ENCODE measurements at regions of chr3 and their contacts with region 1.

Region 1: GRCh38 chr3:125110016-125110875 is 54.4 kb upstream of the HEG1 start:
- DNase-seq: no peak
- H3K4me3 Mint-ChIP-seq: no peak overlapping the region
- H3K27ac Mint-ChIP-seq: peak overlapping the region; percentile 78
- H3K4me1 Mint-ChIP-seq: peaks cover 52% of the 10 kb centered on the region
- H3K27me3 Mint-ChIP-seq: peaks cover 36% of the 10 kb centered on the region

Region 2: DNA sequence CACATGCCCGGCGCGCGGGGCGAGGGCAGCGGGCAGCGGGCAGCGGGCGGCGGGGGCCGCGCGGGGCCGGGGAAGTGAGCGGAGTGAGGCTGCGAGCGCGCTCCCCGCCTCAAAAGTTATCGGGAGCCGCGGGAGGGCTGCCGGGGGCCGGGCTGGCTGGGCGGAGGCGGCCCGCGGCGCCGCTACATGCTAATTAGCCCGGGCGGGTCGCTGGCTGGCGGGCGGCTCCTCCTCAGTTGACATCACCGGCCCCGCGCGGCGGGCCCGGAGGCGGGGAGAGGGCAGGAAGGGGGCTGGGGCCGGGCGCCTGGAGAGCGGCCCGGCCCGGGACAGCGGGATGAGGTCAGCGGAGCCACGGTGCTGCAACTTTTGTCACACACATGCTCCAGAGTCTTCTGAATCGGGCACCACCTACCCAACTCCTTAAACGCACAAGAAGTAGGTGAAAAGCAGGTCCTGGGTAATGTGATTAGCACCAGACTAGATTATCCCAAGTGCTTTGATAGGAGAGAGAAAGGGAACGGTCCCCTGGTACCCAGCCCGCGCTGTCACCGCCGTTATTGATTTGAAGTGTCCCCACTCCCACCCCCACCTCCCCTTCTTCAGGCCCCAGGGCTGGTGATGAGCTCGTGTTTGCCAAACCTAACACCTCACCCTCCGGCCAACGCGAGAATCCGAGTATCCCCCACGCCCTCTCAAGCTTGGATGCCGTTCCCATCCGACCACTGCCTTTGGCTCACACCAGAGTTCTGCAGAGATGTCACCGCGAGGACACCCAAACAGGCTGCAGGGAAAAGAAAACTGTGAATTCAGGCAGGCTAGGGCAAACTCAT is 54.1 kb before region 1 on chr3 and contains the start of gene HEG1:
- intact Hi-C with region 1: loop called (anchors 1 kb)
- DNase-seq: peak; percentile 75
- H3K4me3 Mint-ChIP-seq: peak within 1 kb of the TSS; percentile 95
- H3K27ac Mint-ChIP-seq: peak within 1 kb of the TSS; percentile 89
- H3K4me1 Mint-ChIP-seq: peaks cover 47% of the 10 kb centered on the region
- H3K27me3 Mint-ChIP-seq: peaks cover 27% of the 10 kb centered on the region
- total RNA-seq, gene HEG1: 58.0 and 59.1 TPM in 2 replicates

Region 3: GRCh38 chr3:125120379-125121122 is 10.3 kb after region 1 on chr3:
- intact Hi-C with region 1: loop called (anchors 1 kb)
- DNase-seq: no peak
- H3K4me3 Mint-ChIP-seq: no peak overlapping the region
- H3K27ac Mint-ChIP-seq: no peak overlapping the region
- H3K4me1 Mint-ChIP-seq: peaks cover 51% of the 10 kb centered on the region
- H3K27me3 Mint-ChIP-seq: peaks cover 5% of the 10 kb centered on the region

Region 4: GRCh38 chr3:125125821-125126245 is 15.6 kb after region 1 on chr3:
- intact Hi-C with region 1: loop called (anchors 1 kb)
- DNase-seq: peak; percentile 42
- H3K4me3 Mint-ChIP-seq: no peak overlapping the region
- H3K27ac Mint-ChIP-seq: peak overlapping the region; percentile 64
- H3K4me1 Mint-ChIP-seq: peaks cover 60% of the 10 kb centered on the region
- H3K27me3 Mint-ChIP-seq: peaks cover 16% of the 10 kb centered on the region

Region 5: GRCh38 chr3:125141596-125142419 is 31.6 kb after region 1 on chr3:
- intact Hi-C with region 1: loop called (anchors 1 kb)
- DNase-seq: peak; percentile 72
- H3K4me3 Mint-ChIP-seq: peak overlapping the region; percentile 74
- H3K27ac Mint-ChIP-seq: peak overlapping the region; percentile 89
- H3K4me1 Mint-ChIP-seq: peaks cover 51% of the 10 kb centered on the region
- H3K27me3 Mint-ChIP-seq: peaks cover 55% of the 10 kb centered on the region

Region 6: GRCh38 chr3:125220727-125221429 is 110.6 kb after region 1 on chr3:
- intact Hi-C with region 1: no loop called
- DNase-seq: no peak
- H3K4me3 Mint-ChIP-seq: no peak overlapping the region
- H3K27ac Mint-ChIP-seq: no peak overlapping the region
- H3K4me1 Mint-ChIP-seq: peaks cover 11% of the 10 kb centered on the region
- H3K27me3 Mint-ChIP-seq: no peaks in the 10 kb centered on the region

Region 7: DNA sequence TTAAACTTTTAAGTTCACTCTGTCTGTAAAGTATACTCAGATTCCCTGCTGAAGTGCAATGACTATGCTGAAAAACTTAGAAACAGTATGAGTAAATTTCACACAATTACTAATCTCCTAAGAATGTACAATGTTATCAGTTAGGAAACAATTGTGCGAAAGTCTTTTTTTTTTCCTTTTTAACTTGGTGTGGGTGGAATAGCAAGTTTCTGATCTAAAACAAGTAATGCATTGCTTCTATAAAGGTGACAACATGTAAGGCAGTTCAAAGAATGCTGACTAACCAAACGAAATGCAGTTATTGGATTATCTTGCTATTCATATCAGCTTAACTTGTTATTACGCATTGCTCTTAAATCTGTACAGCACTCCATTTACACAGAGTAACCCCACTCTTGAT is 121.6 kb after region 1 on chr3:
- intact Hi-C with region 1: loop called (anchors 1 kb)
- DNase-seq: no peak
- H3K4me3 Mint-ChIP-seq: no peak overlapping the region
- H3K27ac Mint-ChIP-seq: peak overlapping the region; percentile 60
- H3K4me1 Mint-ChIP-seq: peaks cover 18% of the 10 kb centered on the region
- H3K27me3 Mint-ChIP-seq: no peaks in the 10 kb centered on the region

Region 8: GRCh38 chr3:126314790-126315658 is 1204.8 kb after region 1 on chr3:
- intact Hi-C with region 1: no loop called
- DNase-seq: no peak
- H3K4me3 Mint-ChIP-seq: no peak overlapping the region
- H3K27ac Mint-ChIP-seq: no peak overlapping the region
- H3K4me1 Mint-ChIP-seq: no peaks in the 10 kb centered on the region
- H3K27me3 Mint-ChIP-seq: no peaks in the 10 kb centered on the region